ENCODE measurements at regions of chr19 and their contacts with region 1.

Region 1: DNA sequence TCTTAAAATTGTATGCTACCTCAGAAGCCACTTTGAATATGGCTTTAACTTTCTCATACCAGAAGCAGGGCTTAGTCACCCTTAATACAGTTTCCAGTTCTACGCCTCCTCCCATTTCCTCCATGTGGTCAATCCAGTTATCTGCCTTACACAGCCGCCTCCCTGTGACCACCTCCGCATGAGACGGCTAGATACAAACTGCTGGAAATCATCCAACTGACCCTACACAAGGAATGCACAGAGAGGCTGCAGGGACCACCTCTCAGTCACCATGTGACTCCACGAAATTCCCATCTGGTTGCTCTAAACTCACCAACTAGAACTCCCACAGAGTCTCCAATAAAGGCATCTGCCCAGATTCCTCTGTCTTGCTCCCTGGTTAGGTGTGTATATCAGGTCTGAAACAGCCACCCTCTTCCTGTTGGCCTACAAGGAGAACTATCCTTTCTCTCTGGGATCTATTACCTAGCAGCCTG is 6.8 kb downstream of the ZNF564 start:
- DNase-seq: peak in 1 of 2 donors; percentile 35
- H3K4me3 ChIP-seq: no peak overlapping the region
- H3K27ac ChIP-seq: peak overlapping the region in 2 of 5 donors; percentile 20 to 35
- H3K4me1 ChIP-seq: peaks cover 13 to 59% (median 41%) of the 10 kb centered on the region in 4 donors
- H3K27me3 ChIP-seq: no peaks in the 10 kb centered on the region
- CTCF ChIP-seq: no peak
- EP300 ChIP-seq: no peak
- POLR2A ChIP-seq: no peak

Region 2: DNA sequence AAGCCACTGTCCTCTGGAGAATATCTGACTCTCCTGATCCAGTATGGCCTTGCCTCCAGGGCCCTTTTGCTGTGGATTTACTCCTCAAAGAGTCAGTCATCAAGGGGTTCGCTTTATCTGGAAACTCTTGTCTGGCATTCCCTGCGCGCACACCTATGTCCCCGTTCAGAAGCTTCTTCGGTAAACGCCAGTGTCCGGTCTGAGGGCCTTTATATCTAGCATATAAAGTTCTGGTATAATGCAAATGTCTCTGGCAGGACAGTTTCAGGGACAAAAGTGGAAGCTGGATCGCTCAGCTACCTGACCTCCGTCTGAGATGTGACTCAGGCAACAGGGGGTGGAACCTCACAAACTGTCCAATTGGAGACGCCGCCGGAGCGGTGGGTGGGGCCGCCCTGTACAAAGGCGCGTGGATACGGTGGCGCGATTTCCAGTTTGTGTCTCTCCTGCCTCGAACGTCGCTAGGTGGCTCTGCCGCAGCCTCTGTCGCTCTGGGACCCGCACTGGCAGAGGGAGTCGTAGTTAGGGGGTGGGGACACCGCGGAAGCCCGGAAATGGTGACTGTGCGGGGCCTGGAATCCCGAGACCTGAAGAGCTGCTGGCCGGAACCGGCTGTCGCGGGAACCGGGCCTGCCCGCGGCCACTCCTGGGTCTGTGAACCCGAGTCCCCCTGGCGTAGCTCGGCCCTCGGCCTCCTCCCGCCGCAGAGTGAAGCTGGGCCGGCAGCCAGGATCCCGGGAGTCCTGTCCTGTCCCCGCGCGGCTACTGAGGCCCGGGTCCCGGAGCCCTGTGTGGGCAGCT is 49.2 kb before region 1 on chr19:
- intact Hi-C with region 1: loop called (anchors 10 kb)
- DNase-seq: peak; percentile 97
- H3K4me3 ChIP-seq: peak overlapping the region; percentile 52 to 69 (median 58)
- H3K27ac ChIP-seq: peak overlapping the region; percentile 84 to 94 (median 91)
- H3K4me1 ChIP-seq: peaks cover 0 to 22% (median 11%) of the 10 kb centered on the region in 4 donors
- H3K27me3 ChIP-seq: no peaks in the 10 kb centered on the region
- CTCF ChIP-seq: peak in 2 of 7 experiments; percentile 27 to 38
- EP300 ChIP-seq: no peak
- POLR2A ChIP-seq: peak in 2 of 4 donors; percentile 20 to 73